ENCODE measurements at regions of chr3 and their contacts with region 1.

Region 1: DNA sequence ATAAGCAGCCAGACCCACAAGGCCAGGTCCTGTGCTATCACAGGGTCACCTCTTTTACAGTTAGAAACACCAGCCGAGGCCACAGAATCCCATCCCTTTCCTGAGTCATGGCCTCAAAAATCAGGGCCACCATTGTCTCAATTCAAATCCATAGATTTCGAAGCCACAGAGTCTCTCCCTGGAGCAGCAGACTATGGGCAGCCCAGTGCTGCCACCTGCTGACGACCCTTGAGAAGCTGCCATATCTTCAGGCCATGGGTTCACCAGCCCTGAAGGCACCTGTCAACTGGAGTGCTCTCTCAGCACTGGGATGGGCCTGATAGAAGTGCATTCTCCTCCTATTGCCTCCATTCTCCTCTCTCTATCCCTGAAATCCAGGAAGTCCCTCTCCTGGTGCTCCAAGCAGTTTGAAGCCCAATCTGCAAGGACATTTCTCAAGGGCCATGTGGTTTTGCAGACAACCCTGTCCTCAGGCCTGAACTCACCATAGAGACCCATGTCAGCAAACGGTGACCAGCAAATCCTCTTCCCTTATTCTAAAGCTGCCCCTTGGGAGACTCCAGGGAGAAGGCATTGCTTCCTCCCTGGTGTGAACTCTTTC is 39.6 kb downstream of the TGM4 start:
- DNase-seq: peak; percentile 27 to 69 (median 53)
- ATAC-seq: peak; percentile 70
- H3K4me3 ChIP-seq: no peak overlapping the region
- H3K4me3 Mint-ChIP-seq: no peak overlapping the region
- H3K27ac ChIP-seq: no peak overlapping the region
- H3K27ac Mint-ChIP-seq: no peak overlapping the region
- H3K4me1 ChIP-seq: no peaks in the 10 kb centered on the region
- H3K4me1 Mint-ChIP-seq: peaks cover 0 to 4% (median 0%) of the 10 kb centered on the region in 7 donors
- H3K27me3 ChIP-seq: no peaks in the 10 kb centered on the region
- H3K27me3 Mint-ChIP-seq: peaks cover 13 to 19% (median 14%) of the 10 kb centered on the region in 5 donors

Region 2: GRCh38 chr3:44323341-44323955 is 590.5 kb before region 1 on chr3:
- CTCF ChIA-PET with region 1: interaction called, 8 read pairs
- POLR2A ChIA-PET with region 1: no interaction called
- intact Hi-C with region 1: loop called (anchors 1 kb)
- DNase-seq: peak in 8 of 9 donors; percentile 20 to 60 (median 41)
- ATAC-seq: peak; percentile 69
- H3K4me3 ChIP-seq: no peak overlapping the region
- H3K4me3 Mint-ChIP-seq: no peak overlapping the region
- H3K27ac ChIP-seq: no peak overlapping the region
- H3K27ac Mint-ChIP-seq: no peak overlapping the region
- H3K4me1 ChIP-seq: no peaks in the 10 kb centered on the region
- H3K4me1 Mint-ChIP-seq: peaks cover 0 to 3% (median 0%) of the 10 kb centered on the region in 7 donors
- H3K27me3 ChIP-seq: no peaks in the 10 kb centered on the region
- H3K27me3 Mint-ChIP-seq: peaks cover 6 to 37% (median 11%) of the 10 kb centered on the region in 5 donors

Region 3: GRCh38 chr3:44535364-44535763 is 378.6 kb before region 1 on chr3:
- CTCF ChIA-PET with region 1: interaction called, 32 read pairs
- POLR2A ChIA-PET with region 1: no interaction called
- intact Hi-C with region 1: loop called (anchors 1 kb)
- DNase-seq: no peak
- ATAC-seq: no peak
- H3K4me3 ChIP-seq: no peak overlapping the region
- H3K4me3 Mint-ChIP-seq: no peak overlapping the region
- H3K27ac ChIP-seq: no peak overlapping the region
- H3K27ac Mint-ChIP-seq: no peak overlapping the region
- H3K4me1 ChIP-seq: no peaks in the 10 kb centered on the region
- H3K4me1 Mint-ChIP-seq: peaks cover 0 to 2% (median 0%) of the 10 kb centered on the region in 7 donors
- H3K27me3 ChIP-seq: no peaks in the 10 kb centered on the region
- H3K27me3 Mint-ChIP-seq: peaks cover 7 to 49% (median 46%) of the 10 kb centered on the region in 5 donors